PC-9 (cell line): ENCODE measurements at regions of chr1 and their contacts with region 1.

Region 1: GRCh38 chr1:18902523-18903290 is at the start of gene ALDH4A1:
- DNase-seq: peak; percentile 94 to 95
- H3K4me3 ChIP-seq: peak within 1 kb of the TSS; percentile 77
- H3K27ac ChIP-seq: peak within 1 kb of the TSS; percentile 91
- H3K4me1 ChIP-seq: peaks cover 20% of the 10 kb centered on the region
- H3K27me3 ChIP-seq: no peaks in the 10 kb centered on the region
- CTCF ChIP-seq: no peak
- total RNA-seq, gene ALDH4A1: 15.0 and 19.4 TPM in 2 replicates

Region 2: GRCh38 chr1:18511149-18511873 is 391.4 kb before region 1 on chr1:
- CTCF ChIA-PET with region 1: no interaction called
- POLR2A ChIA-PET with region 1: no interaction called
- intact Hi-C with region 1: no loop called
- DNase-seq: no peak
- H3K4me3 ChIP-seq: no peak overlapping the region
- H3K27ac ChIP-seq: no peak overlapping the region
- H3K4me1 ChIP-seq: no peaks in the 10 kb centered on the region
- H3K27me3 ChIP-seq: peaks cover 15% of the 10 kb centered on the region
- CTCF ChIP-seq: 0 out of 2 replicates have a peak, but pooled peaks have one; percentile 24

Region 3: GRCh38 chr1:18681423-18681835 is 221.3 kb before region 1 on chr1:
- CTCF ChIA-PET with region 1: no interaction called
- POLR2A ChIA-PET with region 1: no interaction called
- intact Hi-C with region 1: no loop called
- DNase-seq: peak in 1 of 2 experiments; percentile 59
- H3K4me3 ChIP-seq: no peak overlapping the region
- H3K27ac ChIP-seq: no peak overlapping the region
- H3K4me1 ChIP-seq: no peaks in the 10 kb centered on the region
- H3K27me3 ChIP-seq: no peaks in the 10 kb centered on the region
- CTCF ChIP-seq: peak; percentile 74

Region 4: GRCh38 chr1:18820791-18821641 is 81.7 kb before region 1 on chr1:
- CTCF ChIA-PET with region 1: no interaction called
- POLR2A ChIA-PET with region 1: no interaction called
- intact Hi-C with region 1: no loop called
- DNase-seq: peak; percentile 38 to 72
- H3K4me3 ChIP-seq: no peak overlapping the region
- H3K27ac ChIP-seq: no peak overlapping the region
- H3K4me1 ChIP-seq: no peaks in the 10 kb centered on the region
- H3K27me3 ChIP-seq: peaks cover 8% of the 10 kb centered on the region
- CTCF ChIP-seq: peak; percentile 81

Region 5: DNA sequence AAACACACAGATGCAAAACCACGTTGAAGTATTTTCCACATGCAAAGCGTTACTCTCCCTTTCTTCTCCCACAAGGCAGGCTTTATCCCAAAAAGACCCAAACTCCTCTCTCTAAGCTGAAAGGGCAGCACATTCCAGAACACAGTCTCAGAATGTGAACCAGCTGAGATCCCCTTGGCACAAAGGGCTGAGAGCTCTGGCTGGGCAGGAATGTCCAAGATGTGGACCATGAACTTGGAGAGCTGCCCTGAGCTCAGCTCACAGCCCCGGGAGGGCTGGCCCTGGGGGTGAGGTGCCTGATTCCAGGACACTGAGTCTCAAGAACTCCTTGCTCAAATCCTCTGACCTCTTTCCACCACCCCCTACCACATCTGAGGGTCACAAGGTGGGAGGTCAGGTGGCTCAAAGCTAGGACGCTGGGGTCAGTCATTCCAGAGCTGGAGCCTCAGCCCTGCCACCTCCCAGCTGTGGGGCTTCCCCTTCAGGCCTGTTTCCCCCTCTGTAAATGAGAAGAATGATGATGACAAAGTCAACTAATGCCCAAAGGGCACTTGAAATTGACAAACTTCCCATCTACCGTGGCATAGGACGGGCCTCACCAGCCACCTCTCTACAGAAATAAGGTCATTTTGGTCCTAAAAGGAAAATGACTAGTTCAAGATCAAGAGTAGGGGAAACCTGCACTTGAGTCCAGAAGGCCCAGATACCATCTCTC is 11.8 kb before region 1 on chr1:
- CTCF ChIA-PET with region 1: no interaction called
- POLR2A ChIA-PET with region 1: no interaction called
- intact Hi-C with region 1: no loop called
- DNase-seq: no peak
- H3K4me3 ChIP-seq: no peak overlapping the region
- H3K27ac ChIP-seq: no peak overlapping the region
- H3K4me1 ChIP-seq: no peaks in the 10 kb centered on the region
- H3K27me3 ChIP-seq: no peaks in the 10 kb centered on the region
- CTCF ChIP-seq: no peak

Region 6: DNA sequence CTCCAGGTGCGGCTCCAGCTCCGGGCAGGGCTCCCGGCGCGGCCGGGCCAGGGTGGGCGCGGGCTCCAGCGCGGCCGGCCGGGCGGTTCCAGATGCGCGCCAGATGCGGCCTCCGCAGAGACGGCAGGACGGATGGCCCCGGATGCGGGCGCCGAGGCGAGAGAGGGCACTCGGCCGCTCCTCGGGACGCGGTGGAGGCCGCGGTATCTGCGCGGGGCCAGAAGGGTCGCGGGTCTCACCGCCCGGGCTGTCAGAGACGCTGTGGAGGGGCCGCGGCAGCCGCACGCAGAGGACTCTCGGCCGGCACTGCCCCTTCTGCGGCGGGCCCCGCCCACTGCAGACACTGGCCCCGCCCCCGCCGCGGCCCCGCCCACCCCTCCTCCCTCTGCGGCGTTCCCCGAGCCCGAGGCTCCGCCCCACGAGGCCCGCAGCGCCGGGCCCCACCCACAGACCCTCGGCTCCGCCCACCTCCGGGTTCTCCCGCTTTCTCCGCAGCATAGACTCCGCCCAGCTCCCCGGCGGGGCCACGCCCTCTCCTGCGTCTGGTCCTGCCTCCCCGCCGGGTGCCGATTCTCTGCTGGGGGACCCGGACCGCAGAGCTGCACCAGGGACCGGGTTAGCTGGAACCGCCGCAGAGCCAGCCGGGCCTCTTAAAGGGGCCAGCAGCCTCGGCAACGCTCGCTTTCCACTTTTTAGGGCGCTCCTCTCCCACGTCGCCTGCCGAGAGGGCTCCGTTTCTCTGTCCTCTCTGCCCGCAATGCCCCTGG is 53.8 kb after region 1 on chr1 and contains the start of gene IFFO2:
- CTCF ChIA-PET with region 1: interaction called, 3 read pairs
- POLR2A ChIA-PET with region 1: interaction called, 6 read pairs
- intact Hi-C with region 1: loop called (anchors 10 kb)
- DNase-seq: peak; percentile 52 to 97
- H3K4me3 ChIP-seq: peak within 1 kb of the TSS; percentile 80
- H3K27ac ChIP-seq: no peak within 1 kb of the TSS
- H3K4me1 ChIP-seq: peaks cover 20% of the 10 kb centered on the region
- H3K27me3 ChIP-seq: no peaks in the 10 kb centered on the region
- CTCF ChIP-seq: no peak
- total RNA-seq, gene IFFO2: 11.7 and 16.5 TPM in 2 replicates

Region 7: GRCh38 chr1:19096036-19096833 is 193.5 kb after region 1 on chr1:
- CTCF ChIA-PET with region 1: interaction called, 3 read pairs
- POLR2A ChIA-PET with region 1: interaction called, 3 read pairs
- intact Hi-C with region 1: loop called (anchors 1 kb)
- DNase-seq: peak in 1 of 2 experiments; percentile 49
- H3K4me3 ChIP-seq: no peak overlapping the region
- H3K27ac ChIP-seq: no peak overlapping the region
- H3K4me1 ChIP-seq: no peaks in the 10 kb centered on the region
- H3K27me3 ChIP-seq: no peaks in the 10 kb centered on the region
- CTCF ChIP-seq: peak; percentile 53; the same call in 1 of the 2 replicates